ENCODE measurements at regions of chr6 and their contacts with region 1.

Region 1: DNA sequence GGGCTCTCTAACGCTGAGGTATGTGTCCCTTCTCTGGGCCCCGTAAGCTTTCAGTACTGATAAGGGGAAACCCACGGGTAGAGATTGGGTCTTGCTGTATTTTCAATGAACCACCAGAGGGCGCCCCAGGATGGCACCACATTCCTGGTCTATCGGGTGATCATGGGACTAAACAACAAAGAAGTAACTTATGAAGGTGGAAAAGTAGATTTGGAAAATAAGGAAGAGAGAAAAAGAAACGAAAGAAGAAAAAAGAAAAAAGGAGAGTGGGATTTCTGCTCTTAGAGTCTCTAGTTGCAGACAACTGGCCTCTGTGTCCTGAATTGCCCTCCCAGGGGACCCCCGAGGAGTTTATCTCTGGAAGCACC is 93.8 kb downstream of the GMPR start:
- DNase-seq: peak; percentile 79 to 84
- H3K4me3 ChIP-seq: no peak overlapping the region
- H3K4me3 Mint-ChIP-seq: no peak overlapping the region
- H3K27ac Mint-ChIP-seq: no peak overlapping the region
- H3K4me1 ChIP-seq: peaks cover 6% of the 10 kb centered on the region
- H3K4me1 Mint-ChIP-seq: peaks cover 6% of the 10 kb centered on the region
- H3K27me3 ChIP-seq: no peaks in the 10 kb centered on the region
- H3K27me3 Mint-ChIP-seq: no peaks in the 10 kb centered on the region
- CTCF ChIP-seq: peak; percentile 89 to 94

Region 2: GRCh38 chr6:16409531-16410441 is 77.6 kb after region 1 on chr6:
- CTCF ChIA-PET with region 1: interaction called, 8 read pairs
- POLR2A ChIA-PET with region 1: no interaction called
- intact Hi-C with region 1: loop called (anchors 1 kb)
- DNase-seq: peak in 1 of 2 experiments; percentile 53
- H3K4me3 ChIP-seq: no peak overlapping the region
- H3K4me3 Mint-ChIP-seq: no peak overlapping the region
- H3K27ac Mint-ChIP-seq: no peak overlapping the region
- H3K4me1 ChIP-seq: no peaks in the 10 kb centered on the region; the same call in 1 of the 2 replicates
- H3K4me1 Mint-ChIP-seq: peaks cover 5% of the 10 kb centered on the region
- H3K27me3 ChIP-seq: no peaks in the 10 kb centered on the region
- H3K27me3 Mint-ChIP-seq: no peaks in the 10 kb centered on the region
- CTCF ChIP-seq: peak; percentile 76 to 79

Region 3: GRCh38 chr6:16496991-16497801 is 165.0 kb after region 1 on chr6:
- CTCF ChIA-PET with region 1: interaction called, 3 read pairs
- POLR2A ChIA-PET with region 1: no interaction called
- intact Hi-C with region 1: loop called (anchors 1 kb)
- DNase-seq: no peak
- H3K4me3 ChIP-seq: no peak overlapping the region
- H3K4me3 Mint-ChIP-seq: no peak overlapping the region
- H3K27ac Mint-ChIP-seq: no peak overlapping the region
- H3K4me1 ChIP-seq: no peaks in the 10 kb centered on the region
- H3K4me1 Mint-ChIP-seq: peaks cover 5% of the 10 kb centered on the region
- H3K27me3 ChIP-seq: no peaks in the 10 kb centered on the region
- H3K27me3 Mint-ChIP-seq: no peaks in the 10 kb centered on the region
- CTCF ChIP-seq: no peak

Region 4: GRCh38 chr6:16514249-16514648 is 182.1 kb after region 1 on chr6:
- CTCF ChIA-PET with region 1: interaction called, 3 read pairs
- POLR2A ChIA-PET with region 1: no interaction called
- intact Hi-C with region 1: loop called (anchors 1 kb)
- DNase-seq: peak in 1 of 2 experiments; percentile 36
- H3K4me3 ChIP-seq: no peak overlapping the region
- H3K4me3 Mint-ChIP-seq: no peak overlapping the region
- H3K27ac Mint-ChIP-seq: no peak overlapping the region
- H3K4me1 ChIP-seq: no peaks in the 10 kb centered on the region
- H3K4me1 Mint-ChIP-seq: peaks cover 12% of the 10 kb centered on the region
- H3K27me3 ChIP-seq: no peaks in the 10 kb centered on the region
- H3K27me3 Mint-ChIP-seq: no peaks in the 10 kb centered on the region
- CTCF ChIP-seq: peak; percentile 40 to 69

Region 5: GRCh38 chr6:16770701-16771569 is 438.8 kb after region 1 on chr6:
- CTCF ChIA-PET with region 1: interaction called, 7 read pairs
- POLR2A ChIA-PET with region 1: no interaction called
- intact Hi-C with region 1: loop called (anchors 1 kb)
- DNase-seq: peak; percentile 68 to 78
- H3K4me3 ChIP-seq: no peak overlapping the region
- H3K4me3 Mint-ChIP-seq: no peak overlapping the region
- H3K27ac Mint-ChIP-seq: no peak overlapping the region
- H3K4me1 ChIP-seq: peaks cover 12% of the 10 kb centered on the region
- H3K4me1 Mint-ChIP-seq: peaks cover 24% of the 10 kb centered on the region
- H3K27me3 ChIP-seq: no peaks in the 10 kb centered on the region
- H3K27me3 Mint-ChIP-seq: peaks cover 3% of the 10 kb centered on the region
- CTCF ChIP-seq: peak; percentile 87 to 95